Tibial artery (tissue), 4 donors: ENCODE measurements at regions of chr3 and their contacts with region 1.

Region 1: DNA sequence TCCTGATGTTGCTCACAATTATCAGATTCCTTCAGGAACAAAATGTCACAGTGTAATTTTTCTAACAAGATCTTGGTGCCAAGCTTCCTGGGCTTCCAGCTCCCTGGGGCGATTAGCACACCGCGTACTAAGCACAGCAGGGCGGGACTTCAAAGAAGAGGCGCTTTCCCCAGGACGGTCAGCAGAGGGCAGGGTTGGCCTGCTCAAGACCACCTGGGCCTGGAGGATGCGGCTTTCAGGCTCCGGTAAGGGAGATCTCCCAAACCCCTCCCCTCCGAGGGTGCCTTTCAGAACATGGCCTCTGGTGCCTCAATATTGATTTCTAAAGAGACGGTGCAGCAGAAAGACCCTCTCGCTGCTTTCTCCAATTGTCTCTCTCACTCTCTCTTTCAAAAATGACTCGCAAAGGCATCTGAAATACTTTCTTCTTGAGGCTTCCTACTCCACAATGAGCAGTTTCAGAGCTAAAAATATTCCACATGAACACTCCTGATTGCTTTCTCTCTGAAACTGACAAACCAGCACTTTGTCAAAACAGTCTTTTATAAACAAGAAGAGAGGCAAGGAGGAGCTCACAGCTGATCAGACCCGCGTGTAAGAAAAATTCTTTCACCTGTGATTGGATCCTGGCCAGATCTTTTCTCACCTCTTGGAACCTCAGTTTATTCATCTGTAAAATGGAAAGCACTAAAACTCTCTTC is 154.0 kb downstream of the ADAMTS9 start:
- DNase-seq: peak; percentile 87 to 96
- H3K4me3 ChIP-seq: peak overlapping the region in 1 of 2 donors; percentile 24
- H3K27ac ChIP-seq: peak overlapping the region; percentile 20 to 55
- H3K4me1 ChIP-seq: peaks cover 0 to 21% (median 4%) of the 10 kb centered on the region in 4 donors
- H3K27me3 ChIP-seq: no peaks in the 10 kb centered on the region
- CTCF ChIP-seq: peak; percentile 84 to 92

Region 2: DNA sequence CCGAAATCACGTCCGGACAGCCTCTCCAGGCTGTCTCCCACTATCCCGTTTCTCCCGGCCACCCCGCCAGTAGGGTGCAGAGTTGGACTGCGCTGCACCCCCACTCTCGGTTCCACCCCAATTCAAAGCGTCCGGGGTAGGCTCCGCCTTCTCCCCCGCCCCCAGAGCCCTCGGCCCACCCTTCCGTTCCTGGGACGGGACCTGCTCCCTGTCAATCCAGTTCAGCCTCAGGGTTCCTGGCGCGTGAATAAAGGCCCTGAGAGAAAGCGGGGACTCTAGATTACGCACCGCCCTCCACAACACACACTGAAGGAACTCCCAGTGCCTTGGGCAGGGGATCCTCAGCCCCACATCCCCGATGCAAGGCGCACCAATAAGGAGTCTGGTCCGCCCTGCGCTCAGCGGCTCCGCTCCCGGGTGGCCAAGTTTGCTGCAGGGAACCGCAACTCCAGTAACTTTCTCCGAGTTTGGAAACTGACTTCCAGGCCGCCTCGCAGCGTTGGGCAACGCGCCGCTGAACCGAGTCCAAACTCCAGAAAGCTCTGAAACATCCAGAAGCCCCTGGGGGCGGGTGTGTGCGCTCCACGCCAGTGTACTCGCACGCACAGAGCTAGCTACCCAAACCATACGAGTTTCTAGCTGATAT is 152.2 kb after region 1 on chr3:
- intact Hi-C with region 1: loop called (anchors 5 kb)
- DNase-seq: peak; percentile 86 to 97
- H3K4me3 ChIP-seq: peak overlapping the region; percentile 79
- H3K27ac ChIP-seq: peak overlapping the region; percentile 94 to 98
- H3K4me1 ChIP-seq: peaks cover 0 to 29% (median 1%) of the 10 kb centered on the region in 4 donors
- H3K27me3 ChIP-seq: no peaks in the 10 kb centered on the region
- CTCF ChIP-seq: no peak

Region 3: DNA sequence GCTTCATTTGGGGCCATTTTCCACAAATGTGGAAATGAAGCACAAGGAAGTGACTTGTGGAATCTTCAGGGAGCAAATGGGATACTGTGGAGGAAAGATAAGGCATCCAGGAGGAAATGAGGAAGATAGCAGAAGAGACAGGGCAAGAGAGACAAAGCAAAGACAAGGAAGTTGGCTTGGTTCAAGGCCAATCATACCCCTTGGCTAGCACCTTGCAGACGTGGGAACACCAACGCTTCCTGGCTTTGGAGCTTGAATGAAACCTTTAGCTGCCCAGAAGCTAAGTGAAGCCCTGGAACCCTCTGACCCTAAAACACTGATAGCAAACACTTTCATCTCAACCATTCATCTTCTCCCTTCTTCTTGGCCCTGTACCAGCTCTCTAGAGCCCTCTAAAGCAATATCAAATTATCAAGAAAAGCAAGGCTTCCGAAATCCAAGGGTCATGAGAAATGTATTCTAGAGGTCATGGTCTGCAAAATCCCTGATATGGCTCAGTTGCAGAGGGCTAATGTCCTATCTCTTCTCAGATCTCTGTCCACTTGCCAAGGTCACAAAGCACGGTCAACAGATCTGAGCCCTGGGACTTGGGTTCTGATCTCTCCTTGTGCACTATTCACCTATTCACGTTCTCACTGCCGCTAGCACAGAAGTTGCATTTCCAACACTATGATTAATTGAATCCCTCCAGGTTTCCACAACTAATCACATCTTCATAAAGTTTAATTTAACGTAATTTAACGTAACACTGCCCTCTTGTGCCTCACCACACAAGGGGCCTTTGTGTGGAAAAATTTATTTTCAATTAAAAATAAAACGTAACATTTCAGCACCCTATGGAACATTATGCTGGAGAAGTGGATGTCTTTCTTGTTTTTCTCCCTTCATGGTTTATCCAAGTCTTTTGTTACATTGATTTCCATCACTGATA is 711.6 kb after region 1 on chr3:
- intact Hi-C with region 1: loop called (anchors 10 kb)
- DNase-seq: no peak
- H3K4me3 ChIP-seq: no peak overlapping the region
- H3K27ac ChIP-seq: no peak overlapping the region
- H3K4me1 ChIP-seq: no peaks in the 10 kb centered on the region
- H3K27me3 ChIP-seq: no peaks in the 10 kb centered on the region
- CTCF ChIP-seq: peak; percentile 29 to 44